CD8-positive, alpha-beta memory T cell (primary cell): ENCODE measurements at regions of chr19 and their contacts with region 1.

Region 1: GRCh38 chr19:15091901-15092753 is 10.1 kb downstream of the OR1I1 start:
- DNase-seq: peak in 4 of 5 donors; percentile 41 to 62 (median 58)
- H3K4me3 ChIP-seq: no peak overlapping the region
- H3K4me3 Mint-ChIP-seq: peak overlapping the region in 1 of 7 donors; percentile 28
- H3K27ac ChIP-seq: no peak overlapping the region
- H3K27ac Mint-ChIP-seq: peak overlapping the region in 1 of 8 donors; percentile 76
- H3K4me1 ChIP-seq: peaks cover 4% of the 10 kb centered on the region
- H3K4me1 Mint-ChIP-seq: peaks cover 4 to 6% (median 5%) of the 10 kb centered on the region in 3 donors
- H3K27me3 ChIP-seq: no peaks in the 10 kb centered on the region
- H3K27me3 Mint-ChIP-seq: peaks cover 11 to 26% of the 10 kb centered on the region in 2 donors

Region 2: DNA sequence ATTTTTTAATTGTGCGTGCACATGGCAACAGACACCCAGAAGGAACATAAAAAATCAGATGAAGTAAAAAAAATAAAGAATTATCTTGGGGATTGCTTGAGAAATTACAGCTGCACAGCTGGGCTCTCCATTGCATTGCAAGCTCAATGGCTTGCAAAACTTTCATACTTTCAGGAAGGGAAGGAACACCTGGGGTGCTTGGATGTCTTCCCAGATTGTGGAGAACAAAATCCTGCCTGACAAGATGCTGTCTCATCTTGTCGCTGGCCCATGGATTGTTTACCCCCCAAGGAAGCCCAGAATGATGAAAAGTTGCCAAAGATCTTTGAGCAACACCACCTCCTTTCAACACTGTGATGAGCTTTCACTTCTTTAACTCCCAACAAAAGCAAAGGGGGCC is 53.8 kb before region 1 on chr19:
- CTCF ChIA-PET with region 1: no interaction called
- POLR2A ChIA-PET with region 1: no interaction called
- DNase-seq: no peak
- H3K4me3 ChIP-seq: no peak overlapping the region
- H3K4me3 Mint-ChIP-seq: no peak overlapping the region
- H3K27ac ChIP-seq: no peak overlapping the region
- H3K27ac Mint-ChIP-seq: no peak overlapping the region
- H3K4me1 ChIP-seq: no peaks in the 10 kb centered on the region
- H3K4me1 Mint-ChIP-seq: no peaks in the 10 kb centered on the region
- H3K27me3 ChIP-seq: no peaks in the 10 kb centered on the region
- H3K27me3 Mint-ChIP-seq: peaks cover 2 to 46% of the 10 kb centered on the region in 2 donors

Region 3: GRCh38 chr19:15116054-15116615 is 24.0 kb after region 1 on chr19:
- CTCF ChIA-PET with region 1: no interaction called
- POLR2A ChIA-PET with region 1: no interaction called
- DNase-seq: no peak
- H3K4me3 ChIP-seq: no peak overlapping the region
- H3K4me3 Mint-ChIP-seq: no peak overlapping the region
- H3K27ac ChIP-seq: no peak overlapping the region
- H3K27ac Mint-ChIP-seq: no peak overlapping the region
- H3K4me1 ChIP-seq: no peaks in the 10 kb centered on the region
- H3K4me1 Mint-ChIP-seq: peaks cover 0 to 1% (median 0%) of the 10 kb centered on the region in 3 donors
- H3K27me3 ChIP-seq: no peaks in the 10 kb centered on the region
- H3K27me3 Mint-ChIP-seq: no peaks in the 10 kb centered on the region

Region 4: GRCh38 chr19:15136246-15136954 is 44.3 kb after region 1 on chr19:
- CTCF ChIA-PET with region 1: interaction called, 4 read pairs
- POLR2A ChIA-PET with region 1: interaction called, 12 read pairs
- DNase-seq: no peak
- H3K4me3 ChIP-seq: no peak overlapping the region
- H3K4me3 Mint-ChIP-seq: no peak overlapping the region
- H3K27ac ChIP-seq: no peak overlapping the region
- H3K27ac Mint-ChIP-seq: no peak overlapping the region
- H3K4me1 ChIP-seq: no peaks in the 10 kb centered on the region
- H3K4me1 Mint-ChIP-seq: no peaks in the 10 kb centered on the region
- H3K27me3 ChIP-seq: no peaks in the 10 kb centered on the region
- H3K27me3 Mint-ChIP-seq: peaks cover 13 to 36% of the 10 kb centered on the region in 2 donors

Region 5: DNA sequence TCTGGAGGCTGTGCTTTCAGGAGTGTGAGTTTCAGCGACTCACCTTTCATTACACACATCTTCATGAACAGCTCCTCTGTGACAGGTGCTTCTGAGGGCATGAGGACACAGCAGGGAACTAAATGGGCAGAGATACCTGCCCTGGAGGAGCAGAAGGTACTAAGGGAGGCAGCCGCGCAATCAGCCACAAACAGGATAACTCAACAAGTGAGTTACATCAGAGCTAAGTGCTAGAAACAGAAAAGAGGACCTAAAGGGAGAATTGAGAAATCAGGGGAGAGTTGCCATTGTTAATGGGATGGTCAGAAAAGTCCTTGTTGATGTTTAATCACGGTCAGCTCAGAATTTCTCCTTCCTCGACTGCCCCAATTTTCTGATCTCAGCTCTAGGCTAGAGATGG is 57.6 kb after region 1 on chr19:
- CTCF ChIA-PET with region 1: interaction called, 15 read pairs
- POLR2A ChIA-PET with region 1: no interaction called
- DNase-seq: no peak
- H3K4me3 ChIP-seq: no peak overlapping the region
- H3K4me3 Mint-ChIP-seq: no peak overlapping the region
- H3K27ac ChIP-seq: no peak overlapping the region
- H3K27ac Mint-ChIP-seq: no peak overlapping the region
- H3K4me1 ChIP-seq: no peaks in the 10 kb centered on the region
- H3K4me1 Mint-ChIP-seq: no peaks in the 10 kb centered on the region
- H3K27me3 ChIP-seq: no peaks in the 10 kb centered on the region
- H3K27me3 Mint-ChIP-seq: peaks cover 15 to 29% of the 10 kb centered on the region in 2 donors

Region 6: GRCh38 chr19:15195371-15196334 is 103.5 kb after region 1 on chr19:
- CTCF ChIA-PET with region 1: no interaction called
- POLR2A ChIA-PET with region 1: no interaction called
- DNase-seq: no peak
- H3K4me3 ChIP-seq: no peak overlapping the region
- H3K4me3 Mint-ChIP-seq: no peak overlapping the region
- H3K27ac ChIP-seq: no peak overlapping the region
- H3K27ac Mint-ChIP-seq: no peak overlapping the region
- H3K4me1 ChIP-seq: no peaks in the 10 kb centered on the region
- H3K4me1 Mint-ChIP-seq: peaks cover 21 to 38% (median 27%) of the 10 kb centered on the region in 3 donors
- H3K27me3 ChIP-seq: peaks cover 34% of the 10 kb centered on the region
- H3K27me3 Mint-ChIP-seq: peaks cover 43 to 70% of the 10 kb centered on the region in 2 donors